A673 (cell line): ENCODE measurements at regions of chr14 and their contacts with region 1.

Region 1: GRCh38 chr14:86654558-86655184 is 1124.7 kb downstream of the FLRT2 start:
- DNase-seq: peak; percentile 86
- H3K4me3 ChIP-seq: no peak overlapping the region
- H3K27ac ChIP-seq: no peak overlapping the region
- H3K4me1 ChIP-seq: peaks cover 21% of the 10 kb centered on the region
- H3K27me3 ChIP-seq: no peaks in the 10 kb centered on the region
- CTCF ChIP-seq: peak; percentile 77

Region 2: GRCh38 chr14:86066651-86067050 is 588.0 kb before region 1 on chr14:
- CTCF ChIA-PET with region 1: no interaction called
- POLR2A ChIA-PET with region 1: no interaction called
- intact Hi-C with region 1: loop called (anchors 10 kb)
- DNase-seq: no peak
- H3K4me3 ChIP-seq: no peak overlapping the region
- H3K27ac ChIP-seq: no peak overlapping the region
- H3K4me1 ChIP-seq: no peaks in the 10 kb centered on the region
- H3K27me3 ChIP-seq: no peaks in the 10 kb centered on the region
- CTCF ChIP-seq: no peak

Region 3: GRCh38 chr14:86141966-86142365 is 512.7 kb before region 1 on chr14:
- CTCF ChIA-PET with region 1: no interaction called
- POLR2A ChIA-PET with region 1: no interaction called
- intact Hi-C with region 1: loop called (anchors 10 kb)
- DNase-seq: peak; percentile 82
- H3K4me3 ChIP-seq: no peak overlapping the region
- H3K27ac ChIP-seq: peak overlapping the region; percentile 33
- H3K4me1 ChIP-seq: peaks cover 8% of the 10 kb centered on the region
- H3K27me3 ChIP-seq: no peaks in the 10 kb centered on the region
- CTCF ChIP-seq: no peak

Region 4: DNA sequence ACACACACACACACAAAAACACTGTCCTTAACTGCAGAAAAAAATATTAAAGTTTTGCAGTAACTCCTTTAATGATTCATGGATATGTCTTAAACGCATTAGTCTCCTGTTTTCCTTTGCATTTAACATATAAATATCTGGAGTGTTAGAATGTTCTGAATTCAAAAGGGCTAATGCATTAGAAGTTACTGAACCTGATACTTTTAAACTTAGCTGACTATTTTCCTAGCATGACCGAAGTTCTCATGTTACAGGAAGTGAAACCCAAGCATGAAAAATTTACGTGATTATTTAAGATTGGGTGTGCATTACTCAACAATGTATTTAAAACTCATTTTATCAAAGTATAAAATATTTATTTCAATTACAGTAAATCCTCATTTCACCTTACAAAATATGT is 333.5 kb before region 1 on chr14:
- CTCF ChIA-PET with region 1: no interaction called
- POLR2A ChIA-PET with region 1: no interaction called
- intact Hi-C with region 1: loop called (anchors 10 kb)
- DNase-seq: peak; percentile 59
- H3K4me3 ChIP-seq: no peak overlapping the region
- H3K27ac ChIP-seq: peak overlapping the region; percentile 41
- H3K4me1 ChIP-seq: peaks cover 17% of the 10 kb centered on the region
- H3K27me3 ChIP-seq: no peaks in the 10 kb centered on the region
- CTCF ChIP-seq: no peak

Region 5: DNA sequence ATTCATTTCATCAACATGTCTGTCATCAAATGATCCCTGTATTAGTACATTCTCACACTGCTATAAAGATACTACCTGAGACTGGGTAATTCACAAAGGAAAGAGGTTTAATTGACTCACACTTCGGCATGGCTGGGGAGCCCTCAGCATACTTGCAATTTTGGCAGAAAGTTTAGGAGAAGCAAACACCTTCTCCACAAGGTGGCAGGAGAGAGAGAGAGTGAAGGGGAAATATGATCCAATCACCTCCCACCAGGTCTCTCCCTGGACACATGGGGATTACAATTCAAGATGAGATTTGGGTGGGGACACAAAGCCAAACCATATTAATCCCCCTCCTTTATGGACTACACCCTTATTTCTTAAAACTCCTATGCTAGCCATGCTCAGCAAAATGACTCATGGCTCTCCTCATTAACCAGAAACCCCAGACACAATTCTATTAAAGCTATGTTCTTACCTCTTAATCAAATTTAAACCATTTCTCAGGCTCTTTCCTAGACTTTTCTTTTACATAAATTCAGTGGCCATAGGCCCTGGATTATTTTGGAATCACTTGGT is 192.4 kb before region 1 on chr14:
- CTCF ChIA-PET with region 1: no interaction called
- POLR2A ChIA-PET with region 1: no interaction called
- intact Hi-C with region 1: loop called (anchors 5 kb)
- DNase-seq: peak; percentile 46
- H3K4me3 ChIP-seq: no peak overlapping the region
- H3K27ac ChIP-seq: no peak overlapping the region
- H3K4me1 ChIP-seq: peaks cover 10% of the 10 kb centered on the region
- H3K27me3 ChIP-seq: no peaks in the 10 kb centered on the region
- CTCF ChIP-seq: 0 out of 2 replicates have a peak, but pooled peaks have one; percentile 39